HCT116 (cell line): ENCODE measurements at regions of chr2 and their contacts with region 1.

Region 1: GRCh38 chr2:35033748-35034147 is 1321.8 kb upstream of the CRIM1 start:
- DNase-seq: no peak
- ATAC-seq: no peak
- H3K4me3 ChIP-seq: no peak overlapping the region
- H3K27ac ChIP-seq: no peak overlapping the region
- H3K4me1 ChIP-seq: no peaks in the 10 kb centered on the region
- H3K27me3 ChIP-seq: no peaks in the 10 kb centered on the region
- CTCF ChIP-seq: no peak
- POLR2A ChIP-seq: no peak
- RAD21 ChIP-seq: no peak

Region 2: DNA sequence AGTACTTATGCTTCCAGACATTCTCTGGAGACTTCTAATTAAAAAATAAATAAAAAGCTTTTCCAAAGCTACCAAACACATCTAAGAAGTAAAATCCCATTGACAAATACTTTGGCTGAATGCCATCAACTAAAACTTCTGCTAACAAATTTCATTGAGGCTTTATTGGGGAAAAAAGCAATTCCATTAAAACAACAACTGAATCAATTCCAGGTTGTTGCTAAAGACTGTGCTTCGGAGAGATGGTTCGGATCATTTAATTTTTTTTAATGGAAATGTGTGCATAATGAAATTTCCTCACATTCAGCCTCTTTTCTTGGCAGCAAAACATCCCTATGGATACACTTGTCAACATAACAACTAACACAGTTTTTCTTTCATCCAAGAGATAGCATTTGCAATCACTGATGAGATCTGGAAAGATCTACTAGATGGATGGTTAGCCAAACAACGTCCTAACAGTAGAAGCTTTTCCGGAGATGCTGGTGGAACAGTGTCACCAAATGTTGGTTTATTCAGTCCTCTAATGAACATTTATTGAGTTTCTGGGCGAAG is 988.6 kb before region 1 on chr2:
- CTCF ChIA-PET with region 1: no interaction called
- POLR2A ChIA-PET with region 1: no interaction called
- RAD21 ChIA-PET with region 1: no interaction called
- intact Hi-C with region 1: loop called (anchors 5 kb)
- DNase-seq: no peak
- ATAC-seq: no peak
- H3K4me3 ChIP-seq: no peak overlapping the region
- H3K27ac ChIP-seq: no peak overlapping the region
- H3K4me1 ChIP-seq: no peaks in the 10 kb centered on the region
- H3K27me3 ChIP-seq: no peaks in the 10 kb centered on the region
- CTCF ChIP-seq: no peak
- POLR2A ChIP-seq: no peak
- RAD21 ChIP-seq: no peak